OCI-LY7 (cell line): ENCODE measurements at regions of chr15 and their contacts with region 1.

Region 1: GRCh38 chr15:77538027-77538451 is 94.7 kb downstream of the LINGO1 start:
- DNase-seq: peak; percentile 90
- H3K4me3 ChIP-seq: peak overlapping the region; percentile 58
- H3K27ac ChIP-seq: peak overlapping the region; percentile 93
- H3K4me1 ChIP-seq: peaks cover 56% of the 10 kb centered on the region
- CTCF ChIP-seq: no peak

Region 2: DNA sequence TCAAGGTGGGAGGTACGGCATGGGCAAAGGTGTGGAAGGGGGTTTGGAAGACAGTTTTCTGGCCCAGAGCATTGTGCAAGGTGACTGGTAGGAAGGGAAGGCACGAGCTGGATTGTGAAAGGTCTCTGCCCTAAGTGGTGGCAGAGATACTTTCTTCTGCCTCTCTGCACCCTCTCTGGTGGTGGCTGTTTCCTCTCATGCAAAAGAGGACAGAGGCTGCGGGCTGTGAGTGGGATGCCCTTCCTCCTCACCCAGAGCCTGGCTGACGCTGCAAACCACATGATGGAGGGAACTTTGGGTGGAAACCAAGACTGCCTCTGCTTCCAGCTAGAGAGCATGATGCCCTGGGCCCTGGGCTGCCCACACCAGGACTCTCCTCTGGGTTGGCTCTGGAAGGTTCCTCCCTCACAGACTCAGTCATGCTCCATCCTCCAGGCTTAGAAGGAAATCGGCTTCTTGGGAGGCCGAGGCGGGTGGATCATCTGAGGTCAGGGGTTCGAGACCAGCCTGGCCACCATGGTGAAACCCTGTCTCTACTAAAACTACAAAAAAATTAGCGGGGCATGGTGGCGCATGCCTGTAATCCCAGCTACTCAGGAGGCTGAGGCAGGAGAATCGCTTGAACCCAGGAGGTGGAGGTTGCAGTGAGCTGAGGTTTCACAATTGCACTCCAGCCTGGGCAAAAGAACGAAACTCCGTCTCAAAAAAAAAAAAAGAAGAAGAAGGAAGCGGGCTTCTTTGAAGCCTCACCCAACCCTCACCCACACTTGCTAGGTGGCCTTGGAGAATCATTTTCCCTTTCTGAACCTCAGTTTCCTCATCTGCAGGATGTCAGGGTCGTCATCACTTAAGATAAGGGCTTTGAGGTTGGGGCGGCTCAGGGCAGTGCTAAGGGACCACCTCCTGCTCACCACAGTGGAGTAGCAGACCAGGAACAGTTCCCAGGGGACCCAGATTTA is 534.8 kb before region 1 on chr15:
- CTCF ChIA-PET with region 1: no interaction called
- POLR2A ChIA-PET with region 1: no interaction called
- intact Hi-C with region 1: loop called (anchors 2 kb)
- DNase-seq: peak; percentile 84
- H3K4me3 ChIP-seq: peak overlapping the region; percentile 15
- H3K27ac ChIP-seq: peak overlapping the region; percentile 58
- H3K4me1 ChIP-seq: peaks cover 29% of the 10 kb centered on the region
- CTCF ChIP-seq: no peak

Region 3: GRCh38 chr15:77584201-77584600 is 46.2 kb after region 1 on chr15:
- CTCF ChIA-PET with region 1: no interaction called
- POLR2A ChIA-PET with region 1: no interaction called
- intact Hi-C with region 1: no loop called
- DNase-seq: peak; percentile 17
- H3K4me3 ChIP-seq: no peak overlapping the region
- H3K27ac ChIP-seq: no peak overlapping the region
- H3K4me1 ChIP-seq: no peaks in the 10 kb centered on the region
- CTCF ChIP-seq: peak; percentile 46; the same call in 1 of the 2 replicates